Dorsolateral prefrontal cortex (tissue), 120 donors: ENCODE measurements at regions of chr3 and their contacts with region 1.

Region 1: GRCh38 chr3:127455541-127456450 is 134.7 kb downstream of the TPRA1 start:
- DNase-seq: peak; percentile 65 to 89 (median 78)
- H3K4me3 ChIP-seq: peak overlapping the region; percentile 20 to 64 (median 48)
- H3K27ac ChIP-seq: peak overlapping the region in 48 of 59 donors; percentile 12 to 84 (median 61)
- H3K27me3 ChIP-seq: peaks cover 0 to 34% (median 14%) of the 10 kb centered on the region in 45 donors
- CTCF ChIP-seq: peak; percentile 73 to 100 (median 95)

Region 2: GRCh38 chr3:126522363-126522788 is 933.4 kb before region 1 on chr3:
- intact Hi-C with region 1: loop called (anchors 5 kb)
- DNase-seq: peak in 9 of 10 donors; percentile 36 to 77 (median 68)
- H3K4me3 ChIP-seq: no peak overlapping the region
- H3K27ac ChIP-seq: peak overlapping the region in 10 of 59 donors; percentile 12 to 85 (median 58)
- H3K27me3 ChIP-seq: peaks cover 0 to 17% (median 0%) of the 10 kb centered on the region in 45 donors
- CTCF ChIP-seq: peak; percentile 82 to 97 (median 92)

Region 3: GRCh38 chr3:126679318-126679751 is 776.5 kb before region 1 on chr3:
- intact Hi-C with region 1: loop called (anchors 1 to 5 kb)
- DNase-seq: peak; percentile 75 to 92 (median 86)
- H3K4me3 ChIP-seq: peak overlapping the region in 31 of 59 donors; percentile 1 to 45 (median 19)
- H3K27ac ChIP-seq: peak overlapping the region in 5 of 59 donors; percentile 10 to 46 (median 34)
- H3K27me3 ChIP-seq: peaks cover 0 to 5% (median 0%) of the 10 kb centered on the region in 45 donors
- CTCF ChIP-seq: peak; percentile 91 to 100 (median 98)

Region 4: GRCh38 chr3:126752303-126752842 is 703.4 kb before region 1 on chr3:
- intact Hi-C with region 1: loop called (anchors 5 kb)
- DNase-seq: peak; percentile 72 to 87 (median 80)
- H3K4me3 ChIP-seq: no peak overlapping the region
- H3K27ac ChIP-seq: peak overlapping the region in 5 of 59 donors; percentile 8 to 38 (median 20)
- H3K27me3 ChIP-seq: no peaks in the 10 kb centered on the region
- CTCF ChIP-seq: peak; percentile 67 to 96 (median 88)

Region 5: DNA sequence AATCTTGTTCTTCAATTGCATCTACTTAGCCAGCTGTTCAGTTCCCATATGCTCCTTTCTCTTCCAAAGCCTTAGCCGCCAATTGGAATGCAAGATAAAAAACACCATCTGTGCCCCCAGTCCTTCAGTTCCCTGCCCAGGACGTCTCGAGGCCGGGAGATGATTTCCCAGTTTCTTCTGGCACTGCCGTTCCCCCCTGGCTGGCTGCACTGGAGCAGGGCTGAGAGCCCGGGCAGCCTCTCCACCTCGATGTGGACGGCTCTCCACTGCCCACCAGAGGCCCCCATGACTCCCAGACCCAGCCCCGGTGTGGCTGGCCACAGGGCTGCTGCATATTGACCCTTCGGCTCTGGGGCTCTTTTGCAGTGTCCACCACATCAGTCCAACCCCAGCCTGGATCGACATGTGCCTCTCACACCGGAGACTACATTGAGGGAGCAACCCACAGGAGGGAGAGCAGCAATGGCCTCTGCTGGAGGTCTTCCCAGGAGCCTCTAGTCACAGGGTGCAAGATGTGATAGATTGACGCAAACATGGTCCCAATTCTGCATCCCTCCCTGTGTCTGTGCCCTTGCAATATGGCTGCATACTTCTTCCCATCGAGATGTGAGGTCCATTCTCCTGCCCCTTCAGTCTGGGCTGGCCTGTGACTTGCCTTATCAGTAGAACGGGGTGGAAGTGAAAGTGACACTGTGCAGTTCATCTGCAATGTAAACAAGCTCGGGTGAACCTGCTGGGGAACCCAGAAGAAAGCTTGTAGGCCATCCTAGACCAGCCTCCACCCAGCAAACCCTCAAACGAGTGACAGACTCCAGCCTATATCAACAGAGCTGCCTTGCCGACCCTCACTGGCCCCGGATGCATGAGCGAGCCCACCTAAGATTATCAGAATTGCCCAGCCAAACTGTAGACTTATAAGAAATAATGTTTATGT is 115.6 kb before region 1 on chr3:
- intact Hi-C with region 1: no loop called
- DNase-seq: no peak
- H3K4me3 ChIP-seq: no peak overlapping the region
- H3K27ac ChIP-seq: no peak overlapping the region
- H3K27me3 ChIP-seq: peaks cover 0 to 65% (median 22%) of the 10 kb centered on the region in 45 donors
- CTCF ChIP-seq: no peak

Region 6: DNA sequence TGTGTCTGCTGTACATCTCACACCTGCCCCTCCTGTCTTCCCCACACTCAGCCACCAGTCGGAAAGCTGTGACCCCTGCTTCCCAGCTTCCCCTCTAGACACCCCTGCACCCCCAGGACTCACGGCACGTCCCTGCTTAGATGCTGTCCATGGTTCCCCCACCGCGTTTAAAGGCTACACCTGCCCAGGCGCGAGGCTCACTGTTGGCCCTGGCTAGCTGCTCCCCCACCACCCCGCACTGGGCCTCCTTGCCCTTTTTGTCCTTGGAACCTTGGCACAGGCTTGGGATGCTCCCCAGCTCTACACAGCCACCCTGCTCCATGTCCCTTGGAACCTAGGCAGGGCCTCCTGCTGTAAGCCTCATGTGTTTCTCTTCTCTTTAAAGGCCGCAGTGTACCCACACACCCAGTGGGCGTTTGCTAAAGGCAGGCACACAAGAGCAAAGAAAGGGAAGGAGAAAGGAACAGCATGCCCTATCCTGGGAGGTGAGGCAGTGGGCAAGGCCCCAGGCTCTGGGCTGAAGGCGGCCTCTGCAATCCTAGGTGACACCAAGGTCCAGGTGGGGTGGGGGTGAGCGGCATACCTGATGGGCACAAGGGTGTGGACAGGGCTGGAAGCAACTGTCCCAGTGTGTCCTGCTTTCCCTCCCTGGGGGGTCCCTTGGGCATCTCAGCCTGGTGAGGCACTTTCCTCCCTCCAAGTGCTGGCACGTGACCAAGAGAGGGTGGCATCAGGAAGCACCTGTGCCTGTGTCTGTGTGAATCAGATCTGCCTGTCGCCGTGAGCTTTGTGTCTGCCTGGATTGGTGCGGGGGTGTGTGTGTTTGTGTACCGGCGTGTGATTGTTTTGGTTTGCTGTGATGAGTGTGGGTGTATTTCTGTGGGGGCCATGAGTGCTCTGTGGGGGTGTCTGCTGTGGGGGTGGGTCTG is 80.4 kb after region 1 on chr3:
- intact Hi-C with region 1: loop called (anchors 5 kb)
- DNase-seq: peak in 7 of 10 donors; percentile 45 to 82 (median 71)
- H3K4me3 ChIP-seq: no peak overlapping the region
- H3K27ac ChIP-seq: peak overlapping the region in 41 of 59 donors; percentile 10 to 87 (median 64)
- H3K27me3 ChIP-seq: peaks cover 0 to 2% (median 0%) of the 10 kb centered on the region in 45 donors
- CTCF ChIP-seq: no peak

Region 7: DNA sequence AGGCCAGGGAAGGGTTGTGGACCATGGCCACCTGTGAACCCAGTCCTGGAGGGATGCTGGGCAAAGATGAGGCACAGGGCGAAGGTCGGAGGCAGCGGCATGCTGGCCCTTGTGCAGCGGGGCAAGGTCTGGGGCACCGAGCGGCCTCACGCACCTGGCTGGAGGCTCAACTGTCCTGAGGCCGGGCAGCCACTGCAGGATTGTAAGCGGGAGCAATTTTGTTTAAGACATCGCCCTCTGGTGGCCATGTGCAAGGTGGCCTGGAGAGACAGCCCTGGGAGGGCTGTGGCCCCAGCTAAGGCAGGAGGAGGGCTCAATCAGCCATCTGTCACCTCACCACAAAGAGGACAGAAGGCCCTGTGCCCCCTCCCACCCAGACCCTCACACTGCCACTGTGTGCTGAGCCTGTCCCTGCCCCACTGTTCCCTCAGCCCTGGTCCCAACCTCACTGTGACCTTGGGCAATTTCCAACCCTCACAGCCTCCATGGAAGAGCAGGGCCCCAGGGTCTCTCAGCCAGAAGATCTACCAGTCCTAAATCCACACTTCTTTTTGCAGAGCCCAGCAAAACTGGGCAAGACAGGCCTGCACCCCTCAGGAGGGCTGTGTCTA is 88.5 kb after region 1 on chr3:
- intact Hi-C with region 1: loop called (anchors 5 kb)
- DNase-seq: peak in 9 of 10 donors; percentile 50 to 79 (median 75)
- H3K4me3 ChIP-seq: no peak overlapping the region
- H3K27ac ChIP-seq: peak overlapping the region in 41 of 59 donors; percentile 1 to 82 (median 57)
- H3K27me3 ChIP-seq: no peaks in the 10 kb centered on the region
- CTCF ChIP-seq: peak; percentile 56 to 90 (median 82)